GM10248 (cell line): ENCODE measurements at regions of chr2 and their contacts with region 1.

Region 1: DNA sequence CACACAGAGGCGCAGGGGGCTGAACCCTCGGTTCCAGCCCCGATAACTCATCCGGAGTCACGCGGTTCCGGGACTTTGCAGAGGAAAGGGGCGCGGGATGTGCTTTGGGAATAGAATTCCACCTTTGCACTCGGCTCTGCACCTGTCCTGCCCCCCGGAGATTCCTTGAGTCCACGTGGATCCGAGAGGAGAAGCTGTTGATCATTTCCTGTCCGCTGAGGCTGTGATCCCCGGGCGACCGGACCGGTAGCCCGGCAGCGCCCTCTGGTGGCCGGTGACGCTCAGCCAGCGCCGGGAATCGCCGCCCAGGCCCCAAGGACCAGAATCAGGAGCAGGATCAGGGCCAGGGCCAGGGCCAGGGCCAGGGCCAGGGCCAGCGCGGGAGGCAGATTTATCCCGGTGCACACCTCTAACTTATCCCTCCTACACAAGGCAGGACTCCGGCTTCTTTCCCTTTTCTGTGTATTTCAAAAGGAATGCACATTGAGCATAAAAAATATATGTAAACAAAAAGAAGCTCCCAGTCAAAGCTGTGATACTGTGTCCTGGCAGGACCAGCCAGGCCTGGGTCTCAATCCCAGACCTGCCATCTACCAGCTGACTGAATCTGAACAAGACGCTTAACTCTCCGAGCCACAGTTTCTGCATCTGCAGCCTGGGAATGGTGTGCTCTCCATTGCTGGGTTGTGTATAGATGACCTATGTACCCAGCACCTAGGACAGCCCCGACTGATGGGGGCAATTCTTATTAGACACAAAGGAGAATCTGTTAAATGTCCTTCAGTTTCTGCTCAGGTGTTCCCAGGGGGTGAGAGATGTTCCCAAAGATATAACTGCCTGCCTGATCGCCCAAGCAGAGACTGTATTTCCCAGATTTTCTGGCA is 8.5 kb upstream of the SPATA3 start:
- DNase-seq: peak; percentile 92
- CTCF ChIP-seq: peak; percentile 96

Region 2: DNA sequence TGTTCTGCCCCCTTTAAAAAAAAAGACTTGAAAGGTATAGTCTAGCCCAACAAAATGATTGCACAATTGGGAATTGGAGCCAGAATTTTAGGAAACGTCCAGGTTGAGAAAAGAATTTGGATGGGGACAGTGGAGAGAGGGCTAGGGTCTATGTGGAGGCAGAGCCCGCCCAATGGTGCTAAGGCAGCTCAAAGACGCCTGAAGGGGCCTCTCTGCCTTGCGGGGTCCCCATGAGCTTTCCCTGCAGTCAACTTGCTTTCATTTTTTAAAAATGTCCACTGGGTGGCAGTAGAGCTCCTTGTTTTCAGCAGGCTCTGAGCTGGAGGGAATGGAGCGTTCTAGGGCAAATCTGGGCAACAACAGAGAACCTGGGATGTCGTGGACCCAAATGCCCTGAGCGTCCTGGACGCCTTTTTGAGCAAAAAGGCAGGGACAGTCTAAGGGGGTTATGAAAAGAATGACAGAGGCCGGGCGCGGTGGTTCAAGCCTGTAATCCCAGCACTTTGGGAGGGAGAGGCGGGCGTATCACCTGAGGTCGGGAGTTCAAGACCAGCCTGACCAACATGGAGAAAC is 162.9 kb before region 1 on chr2:
- CTCF ChIA-PET with region 1: interaction called, 64 read pairs
- POLR2A ChIA-PET with region 1: no interaction called
- DNase-seq: peak; percentile 83
- CTCF ChIP-seq: peak; percentile 68

Region 3: GRCh38 chr2:230873476-230874451 is 113.6 kb before region 1 on chr2:
- CTCF ChIA-PET with region 1: interaction called, 13 read pairs
- POLR2A ChIA-PET with region 1: no interaction called
- DNase-seq: peak; percentile 78
- CTCF ChIP-seq: no peak

Region 4: GRCh38 chr2:230924470-230925341 is 62.7 kb before region 1 on chr2 and contains the start of gene GPR55:
- CTCF ChIA-PET with region 1: interaction called, 242 read pairs
- POLR2A ChIA-PET with region 1: interaction called, 4 read pairs
- DNase-seq: peak; percentile 79
- CTCF ChIP-seq: peak; percentile 70

Region 5: GRCh38 chr2:230956827-230957755 is 30.3 kb before region 1 on chr2:
- CTCF ChIA-PET with region 1: interaction called, 32 read pairs
- POLR2A ChIA-PET with region 1: interaction called, 7 read pairs
- DNase-seq: peak; percentile 68
- CTCF ChIP-seq: no peak

Region 6: DNA sequence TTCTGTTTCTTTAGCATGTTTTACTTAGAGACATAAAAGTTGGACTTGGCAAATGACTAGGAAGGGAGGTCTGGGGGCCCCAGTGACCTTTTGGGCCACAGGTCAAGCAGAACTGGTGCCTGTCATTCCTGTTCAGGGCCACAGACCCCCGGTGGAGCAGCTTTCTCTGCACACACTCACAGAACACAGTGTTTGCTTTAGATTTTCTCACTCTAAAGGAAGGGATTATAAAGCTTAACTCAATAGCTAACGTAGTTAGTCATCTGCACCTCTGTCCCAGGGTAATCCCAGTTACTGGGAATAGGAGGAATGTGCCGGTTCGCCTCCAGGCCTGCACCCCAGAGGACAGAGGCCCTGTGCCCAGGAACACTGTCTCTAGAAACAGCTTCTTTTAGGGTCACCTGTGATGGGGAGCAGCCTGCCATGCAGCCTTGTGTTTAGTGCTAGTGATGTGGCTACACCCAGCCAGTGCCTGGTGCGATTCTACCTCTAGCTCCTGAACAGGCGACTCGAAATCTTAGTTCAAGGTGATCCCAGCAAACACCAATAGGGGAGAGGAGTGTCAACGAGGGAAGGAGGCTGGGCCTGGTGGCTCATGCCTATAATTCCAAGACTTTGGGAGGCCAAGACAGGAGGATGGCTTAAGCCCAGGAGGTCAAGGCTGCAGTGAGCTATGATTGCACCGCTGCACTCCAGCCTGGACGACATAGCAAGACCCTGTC is 20.1 kb after region 1 on chr2:
- CTCF ChIA-PET with region 1: interaction called, 11 read pairs
- POLR2A ChIA-PET with region 1: no interaction called
- DNase-seq: no peak
- CTCF ChIP-seq: no peak

Region 7: DNA sequence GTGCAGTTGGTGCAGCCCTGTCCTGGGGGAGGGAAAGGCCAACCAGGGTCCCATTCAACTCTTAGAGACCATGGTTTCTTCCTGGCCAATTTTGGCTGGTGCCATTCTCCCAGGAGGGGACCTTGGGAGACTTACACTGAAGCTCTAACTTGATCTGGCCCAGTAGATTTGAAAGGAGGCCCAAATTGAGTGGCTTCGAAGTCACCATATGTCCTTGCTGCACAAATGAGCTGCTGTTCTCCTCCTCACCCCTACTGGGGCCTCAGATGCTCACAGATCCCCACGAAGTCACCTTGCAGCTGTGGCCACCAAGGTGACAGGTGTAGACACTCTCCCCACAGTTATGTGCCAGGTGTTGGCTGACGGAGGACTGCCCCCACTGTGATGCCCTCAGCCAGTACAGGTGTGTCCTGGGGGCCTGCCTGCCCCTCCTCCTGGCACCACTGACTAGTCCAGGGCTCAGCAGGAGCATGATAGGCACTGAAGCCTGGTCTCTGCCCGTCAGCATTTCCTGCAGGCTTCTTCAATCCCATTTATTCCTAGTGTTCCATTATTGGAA is 45.3 kb after region 1 on chr2:
- CTCF ChIA-PET with region 1: no interaction called
- POLR2A ChIA-PET with region 1: no interaction called
- DNase-seq: no peak
- CTCF ChIP-seq: no peak

Region 8: GRCh38 chr2:231068525-231069222 is 81.3 kb after region 1 on chr2:
- CTCF ChIA-PET with region 1: no interaction called
- POLR2A ChIA-PET with region 1: no interaction called
- DNase-seq: no peak
- CTCF ChIP-seq: no peak